Aorta (tissue), 5 donors: ENCODE measurements at regions of chr1 and their contacts with region 1.

Region 1: GRCh38 chr1:117794073-117794472 is 135.3 kb downstream of the GDAP2 start:
- DNase-seq: no peak
- ATAC-seq: peak; percentile 80
- H3K4me3 ChIP-seq: no peak overlapping the region
- H3K27ac ChIP-seq: no peak overlapping the region
- H3K4me1 ChIP-seq: peaks cover 0 to 4% of the 10 kb centered on the region in 2 donors
- H3K27me3 ChIP-seq: no peaks in the 10 kb centered on the region

Region 2: DNA sequence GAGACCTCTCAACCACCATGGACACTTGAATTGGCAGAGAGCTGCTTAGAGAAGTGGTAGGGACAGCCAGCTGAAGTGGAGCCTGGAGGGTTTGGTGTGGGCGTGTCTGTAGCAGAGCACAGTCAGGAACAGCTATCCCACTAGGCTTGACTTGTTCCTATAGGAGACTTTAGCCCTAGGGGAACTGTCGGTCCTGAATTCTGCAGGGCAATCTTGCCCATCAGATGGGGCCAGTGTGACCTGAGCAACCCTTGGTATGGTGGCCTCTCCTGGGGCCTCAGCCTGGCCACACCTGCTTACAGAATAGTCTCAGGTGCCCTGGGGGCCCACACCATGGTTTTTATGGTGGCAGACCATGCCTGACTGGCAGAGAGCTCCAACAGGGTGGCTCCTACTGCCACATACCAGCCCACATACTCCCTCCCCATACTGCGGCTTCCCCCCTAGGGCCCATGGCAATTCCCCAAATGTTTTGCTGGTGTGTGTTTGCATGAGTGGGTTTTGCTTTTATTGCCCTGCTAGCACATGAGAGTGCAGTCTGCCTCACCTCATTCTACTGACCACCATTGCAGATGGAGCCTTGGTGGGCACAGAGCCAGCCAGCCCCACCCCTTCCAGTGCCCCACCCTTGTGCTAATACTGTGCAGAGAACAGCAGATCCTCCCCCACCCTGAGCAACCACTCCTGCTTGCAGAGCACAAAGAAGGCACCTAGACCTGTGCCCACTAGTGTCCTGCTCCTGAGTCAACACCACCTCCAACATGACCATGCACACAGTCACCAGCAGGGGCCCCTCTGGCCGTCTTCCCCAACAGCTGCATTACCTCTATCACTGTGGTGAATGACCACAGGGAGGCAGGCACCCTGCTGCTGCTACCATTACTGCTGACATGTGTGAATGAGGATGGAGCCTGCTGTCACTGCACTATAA is 48.4 kb after region 1 on chr1:
- intact Hi-C with region 1: loop called in 1 of 2 experiments (anchors 5 kb)
- DNase-seq: no peak
- ATAC-seq: no peak
- H3K4me3 ChIP-seq: no peak overlapping the region
- H3K27ac ChIP-seq: no peak overlapping the region
- H3K4me1 ChIP-seq: peaks cover 0 to 4% of the 10 kb centered on the region in 2 donors
- H3K27me3 ChIP-seq: no peaks in the 10 kb centered on the region